Activated CD8-positive, alpha-beta memory T cell treated with anti-CD3 and anti-CD28 coated beads, Interleukin-2, amount 10 ng/mL, durations not matched to agents 7 days and 5 days (primary cell): ENCODE measurements at regions of chr19 and their contacts with region 1.

Region 1: DNA sequence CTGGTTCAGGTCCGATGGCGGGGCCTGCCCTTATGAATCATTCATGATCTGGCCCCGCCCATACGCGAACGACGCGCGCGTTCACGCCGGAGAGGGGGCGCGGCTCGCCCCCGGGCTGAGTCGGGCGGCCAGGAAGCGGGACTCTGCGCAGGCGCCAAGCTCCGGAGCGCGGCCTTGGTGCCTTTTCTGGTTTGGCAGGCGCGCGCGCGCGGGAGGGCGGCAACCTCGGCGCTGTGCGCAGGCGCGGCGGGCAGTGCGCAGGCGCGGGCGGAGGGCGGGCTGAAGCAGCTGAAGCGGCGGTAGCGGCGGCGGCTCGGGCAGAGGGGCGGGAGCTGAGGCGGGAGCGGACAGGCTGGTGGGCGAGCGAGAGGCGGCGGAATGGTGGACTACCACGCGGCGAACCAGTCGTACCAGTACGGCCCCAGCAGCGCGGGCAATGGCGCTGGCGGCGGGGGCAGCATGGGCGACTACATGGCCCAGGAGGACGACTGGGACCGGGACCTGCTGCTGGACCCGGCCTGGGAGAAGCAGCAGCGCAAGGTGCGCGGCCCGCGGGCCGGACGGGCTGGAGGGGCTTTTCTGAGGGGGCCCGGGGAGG is at the start of gene ACTN4:
- DNase-seq: peak; percentile 99
- ATAC-seq: peak; percentile 93
- H3K4me3 Mint-ChIP-seq: peak within 1 kb of the TSS; percentile 93
- H3K27ac Mint-ChIP-seq: peak within 1 kb of the TSS; percentile 78
- H3K4me1 Mint-ChIP-seq: peaks cover 47% of the 10 kb centered on the region
- H3K27me3 Mint-ChIP-seq: no peaks in the 10 kb centered on the region
- total RNA-seq, gene ACTN4: 413 to 433 TPM

Region 2: GRCh38 chr19:38564981-38565690 is 82.3 kb before region 1 on chr19:
- CTCF ChIA-PET with region 1: no interaction called
- DNase-seq: peak; percentile 57
- ATAC-seq: peak; percentile 63
- H3K4me3 Mint-ChIP-seq: peak overlapping the region; percentile 62
- H3K27ac Mint-ChIP-seq: peak overlapping the region; percentile 60
- H3K4me1 Mint-ChIP-seq: peaks cover 45% of the 10 kb centered on the region
- H3K27me3 Mint-ChIP-seq: peaks cover 39% of the 10 kb centered on the region

Region 3: GRCh38 chr19:38663957-38664502 is 16.6 kb after region 1 on chr19:
- CTCF ChIA-PET with region 1: interaction called, 10 read pairs
- DNase-seq: peak; percentile 64
- ATAC-seq: peak; percentile 50
- H3K4me3 Mint-ChIP-seq: peak overlapping the region; percentile 24
- H3K27ac Mint-ChIP-seq: peak overlapping the region; percentile 71
- H3K4me1 Mint-ChIP-seq: peaks cover 82% of the 10 kb centered on the region
- H3K27me3 Mint-ChIP-seq: no peaks in the 10 kb centered on the region